ENCODE measurements at regions of chr16 and their contacts with region 1.

Region 1: DNA sequence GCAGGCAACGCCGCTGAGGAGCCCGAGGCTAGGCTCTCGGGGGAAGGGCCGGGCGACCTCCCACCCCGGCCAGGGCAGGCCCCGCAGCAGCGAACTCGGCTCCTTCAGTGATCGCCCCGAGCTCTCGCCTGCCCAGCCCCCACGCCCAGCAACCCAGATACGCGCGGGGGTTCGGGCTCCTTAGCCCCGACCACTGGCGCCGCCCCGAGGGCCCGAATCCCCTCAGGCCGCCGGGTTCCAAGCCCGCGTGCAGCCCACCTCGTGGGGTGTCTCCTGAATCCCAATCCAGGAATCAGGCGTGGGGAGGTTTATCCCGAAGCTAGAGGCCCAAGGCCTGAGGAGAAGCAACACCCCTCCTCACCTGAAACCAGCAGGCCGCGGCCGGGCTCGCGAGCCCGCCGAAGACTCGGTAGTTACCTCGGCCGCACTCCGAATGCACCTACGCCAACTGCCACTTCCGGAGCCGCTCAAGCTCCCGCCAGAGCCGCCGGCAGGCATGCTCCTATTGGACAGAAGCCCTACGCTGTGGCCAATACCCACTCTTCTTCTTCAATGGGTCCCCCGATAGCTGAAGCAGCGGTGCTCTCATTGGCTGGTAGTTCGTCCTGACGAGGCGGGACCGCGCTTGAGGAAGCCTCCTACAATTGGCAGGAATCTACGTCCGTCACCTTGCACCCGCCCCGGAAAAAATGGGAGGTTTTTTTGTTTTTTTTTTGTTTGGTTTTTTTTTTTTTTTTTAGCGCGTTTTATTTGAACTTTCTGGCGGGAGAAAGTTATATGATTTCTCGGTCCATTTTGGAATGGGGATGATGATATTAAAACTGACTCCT is at the start of gene RFWD3:
- DNase-seq: peak; percentile 99 to 100 (median 99)
- ATAC-seq: peak; percentile 99
- H3K4me3 ChIP-seq: peak within 1 kb of the TSS; percentile 78
- H3K27ac ChIP-seq: peak within 1 kb of the TSS; percentile 95
- H3K4me1 ChIP-seq: peaks cover 2 to 24% of the 10 kb centered on the region in 2 experiments; a peak in 4 of 5 replicates
- H3K27me3 ChIP-seq: no peaks in the 10 kb centered on the region
- CTCF ChIP-seq: no peak
- EP300 ChIP-seq: peak; percentile 53; the same call in 1 of the 2 replicates
- POLR2A ChIP-seq: peak; percentile 97
- RAD21 ChIP-seq: no peak
- polyA plus RNA-seq, gene RFWD3: 20.8 to 55.5 TPM

Region 2: GRCh38 chr16:74650966-74651567 is 15.6 kb before region 1 on chr16:
- CTCF ChIA-PET with region 1: no interaction called
- POLR2A ChIA-PET with region 1: interaction called, 16 read pairs
- in situ Hi-C with region 1: no loop called
- intact Hi-C with region 1: no loop called
- DNase-seq: peak in 1 of 4 experiments; percentile 19
- ATAC-seq: no peak; the same call in 2 of the 3 replicates
- H3K4me3 ChIP-seq: no peak overlapping the region
- H3K27ac ChIP-seq: no peak overlapping the region
- H3K4me1 ChIP-seq: no peaks in the 10 kb centered on the region; a peak in 2 of 5 replicates
- H3K27me3 ChIP-seq: no peaks in the 10 kb centered on the region
- CTCF ChIP-seq: peak; percentile 13 to 46 (median 41); a peak in 4 of 6 replicates
- EP300 ChIP-seq: no peak
- POLR2A ChIP-seq: no peak
- RAD21 ChIP-seq: 0 out of 4 replicates have a peak, but pooled peaks of 1 of the 2 experiments have one; percentile 18

Region 3: GRCh38 chr16:74679983-74680382 is 13.3 kb after region 1 on chr16:
- CTCF ChIA-PET with region 1: no interaction called
- POLR2A ChIA-PET with region 1: interaction called, 26 read pairs
- in situ Hi-C with region 1: no loop called
- intact Hi-C with region 1: no loop called
- DNase-seq: no peak
- ATAC-seq: no peak
- H3K4me3 ChIP-seq: no peak overlapping the region
- H3K27ac ChIP-seq: no peak overlapping the region
- H3K4me1 ChIP-seq: peaks cover 0 to 6% of the 10 kb centered on the region in 2 experiments; a peak in 1 of 5 replicates
- H3K27me3 ChIP-seq: peaks cover 0 to 5% of the 10 kb centered on the region in 2 experiments; a peak in 2 of 5 replicates
- CTCF ChIP-seq: no peak
- EP300 ChIP-seq: no peak
- POLR2A ChIP-seq: no peak
- RAD21 ChIP-seq: no peak

Region 4: DNA sequence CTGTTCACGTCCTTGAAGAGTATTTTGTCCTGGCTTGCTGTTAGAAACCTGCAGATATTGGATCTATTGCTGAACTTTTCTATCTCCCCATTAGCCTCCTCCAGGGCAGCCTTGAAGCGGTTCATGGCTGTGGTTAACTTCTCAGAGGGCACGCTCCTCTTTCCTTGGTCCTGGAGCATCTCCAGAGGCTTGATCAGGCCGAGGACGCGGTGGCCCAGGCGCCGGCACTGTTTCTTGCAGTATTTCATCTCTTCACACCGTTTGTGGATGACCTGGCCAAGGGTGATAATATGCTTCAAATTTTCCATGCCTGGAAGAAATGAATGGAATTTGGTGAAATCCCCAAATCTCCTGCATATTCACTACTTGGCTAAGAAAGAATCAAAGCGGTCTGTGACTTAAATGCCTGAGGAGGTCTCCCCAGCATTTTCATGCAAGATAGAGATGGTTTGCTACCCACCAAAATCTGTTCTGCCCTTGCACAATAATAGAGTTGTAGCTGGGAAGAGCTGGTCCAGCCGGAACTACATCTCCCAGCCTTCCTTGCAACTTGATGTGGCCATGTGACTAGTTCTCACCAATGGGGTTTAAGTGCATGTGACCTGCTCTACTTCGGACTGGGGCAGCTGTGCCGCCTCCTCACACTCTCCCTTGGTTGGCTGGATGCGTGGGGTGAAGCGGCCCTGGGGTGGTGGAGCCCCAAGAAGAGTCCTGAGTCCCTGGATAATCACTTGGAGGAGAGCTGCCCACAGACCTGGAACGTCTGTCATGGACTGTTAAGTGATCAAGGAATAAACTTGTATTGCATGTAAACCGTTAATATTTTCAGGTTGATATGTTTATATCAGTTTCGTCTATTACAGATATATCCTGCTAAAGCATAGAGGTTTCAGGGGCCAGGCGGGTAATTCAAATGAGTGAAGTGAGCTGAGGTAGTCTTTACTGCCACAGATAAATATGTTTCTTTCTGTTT is 29.1 kb after region 1 on chr16:
- CTCF ChIA-PET with region 1: no interaction called
- POLR2A ChIA-PET with region 1: interaction called, 19 read pairs
- in situ Hi-C with region 1: no loop called
- intact Hi-C with region 1: no loop called
- DNase-seq: peak; percentile 94 to 95 (median 95)
- ATAC-seq: peak; percentile 98
- H3K4me3 ChIP-seq: peak overlapping the region; percentile 27
- H3K27ac ChIP-seq: peak overlapping the region; percentile 28; the same call in 1 of the 3 replicates
- H3K4me1 ChIP-seq: peaks cover 6 to 8% of the 10 kb centered on the region in 2 experiments; a peak in 4 of 5 replicates
- H3K27me3 ChIP-seq: no peaks in the 10 kb centered on the region
- CTCF ChIP-seq: no peak
- EP300 ChIP-seq: no peak
- POLR2A ChIP-seq: peak; percentile 78
- RAD21 ChIP-seq: no peak

Measured in K562 (cell line).